Transverse colon (tissue), 4 donors: ENCODE measurements at regions of chr17 and their contacts with region 1.

Region 1: DNA sequence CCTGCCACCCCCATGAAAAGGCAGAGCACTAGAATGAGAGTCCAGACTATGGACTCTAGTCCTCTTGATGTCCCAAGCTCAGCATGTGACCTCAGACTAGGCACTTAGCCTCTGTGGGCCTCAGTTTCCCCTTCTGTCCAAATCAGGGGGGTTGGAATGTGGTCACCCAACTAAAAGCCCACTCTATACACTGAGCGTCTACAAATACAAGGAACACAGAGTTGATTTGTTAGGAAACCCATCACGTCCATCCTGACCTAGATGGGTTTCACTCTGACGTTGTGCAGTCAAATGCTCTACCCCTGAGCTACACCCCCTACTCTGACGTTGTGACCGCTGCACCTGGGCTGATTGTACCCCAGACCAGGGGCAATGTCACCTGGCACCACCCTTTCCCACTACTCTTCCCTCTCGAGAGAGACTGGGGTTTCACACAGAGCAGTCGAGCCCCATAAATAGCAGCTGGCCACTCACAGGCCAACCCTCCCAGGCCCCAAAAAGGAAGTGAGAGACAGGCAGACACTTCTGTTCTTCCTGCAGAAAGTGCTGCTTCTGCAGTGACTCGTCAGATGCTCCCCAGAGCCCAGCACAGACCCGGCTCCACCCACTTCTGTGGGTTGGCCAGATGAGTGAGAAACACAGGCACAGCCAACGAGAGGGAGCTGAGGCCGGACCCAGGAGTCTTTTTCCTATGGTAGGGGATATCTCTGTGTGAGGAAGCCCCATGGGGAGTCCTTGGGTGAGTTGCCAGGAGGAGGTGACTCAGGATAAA is 16.1 kb upstream of the TNFRSF13B start:
- DNase-seq: peak; percentile 85
- H3K4me3 ChIP-seq: no peak overlapping the region
- H3K27ac ChIP-seq: peak overlapping the region; percentile 58 to 83 (median 66)
- H3K4me1 ChIP-seq: peaks cover 3 to 25% (median 12%) of the 10 kb centered on the region in 4 donors
- H3K27me3 ChIP-seq: no peaks in the 10 kb centered on the region
- CTCF ChIP-seq: no peak
- EP300 ChIP-seq: no peak
- POLR2A ChIP-seq: peak; percentile 35

Region 2: DNA sequence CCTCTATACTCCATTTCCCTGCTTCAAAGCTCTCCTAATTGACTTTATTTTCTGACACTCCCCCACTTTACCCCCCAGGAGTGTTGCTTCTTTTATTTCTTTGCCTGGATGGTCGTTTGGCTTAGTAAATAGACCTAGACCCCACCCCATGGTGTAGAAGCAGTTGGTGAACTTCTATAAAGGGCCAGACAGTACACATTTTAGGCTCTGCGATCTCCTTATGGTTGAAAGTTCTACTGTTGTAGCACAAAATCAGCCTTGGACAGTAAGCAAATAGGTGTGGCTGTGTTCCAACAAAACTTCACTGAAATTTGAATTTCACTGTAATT is 450.9 kb before region 1 on chr17:
- in situ Hi-C with region 1: loop called in 2 of 4 experiments (anchors 25 kb)
- intact Hi-C with region 1: no loop called
- DNase-seq: no peak
- H3K4me3 ChIP-seq: peak overlapping the region in 1 of 4 donors; percentile 80
- H3K27ac ChIP-seq: peak overlapping the region; percentile 92 to 98 (median 96)
- H3K4me1 ChIP-seq: peaks cover 0 to 15% (median 3%) of the 10 kb centered on the region in 4 donors
- H3K27me3 ChIP-seq: peaks cover 3% of the 10 kb centered on the region
- CTCF ChIP-seq: no peak
- EP300 ChIP-seq: no peak
- POLR2A ChIP-seq: no peak

Region 3: DNA sequence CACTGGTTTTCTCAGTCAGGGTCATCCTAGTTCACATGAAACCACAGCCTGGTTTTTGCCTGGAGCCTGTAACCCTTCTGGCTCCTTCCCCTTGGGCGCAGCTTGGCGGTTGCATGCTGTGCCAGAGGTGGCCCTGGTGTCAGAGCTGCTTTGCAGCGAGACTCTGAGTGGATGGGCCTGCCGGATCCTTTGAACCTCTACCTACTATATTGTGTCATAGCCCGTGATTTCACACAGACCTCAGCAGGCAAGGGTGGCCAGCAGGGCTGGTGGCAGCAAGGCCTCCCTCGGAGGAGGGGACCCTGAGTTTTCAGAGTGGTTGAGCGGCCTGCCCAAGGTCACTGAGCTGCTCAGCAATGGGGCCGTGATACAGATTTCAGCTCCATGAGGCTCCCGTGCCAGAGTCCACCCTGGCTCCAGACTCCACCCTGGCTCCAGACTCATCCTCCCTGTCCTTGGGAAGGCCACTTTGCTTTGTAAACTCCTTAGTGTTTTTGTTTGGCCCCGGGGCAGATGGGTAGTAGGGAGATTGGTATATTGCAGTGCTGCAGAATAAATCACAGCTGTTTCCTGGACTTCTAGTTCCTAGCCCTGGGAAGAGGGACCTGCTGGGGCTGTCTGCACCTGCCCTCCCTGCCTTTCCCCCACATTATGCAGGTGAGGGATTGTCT is 63.9 kb after region 1 on chr17:
- in situ Hi-C with region 1: loop called in 1 of 4 experiments (anchors 10 kb)
- intact Hi-C with region 1: no loop called
- DNase-seq: peak; percentile 57
- H3K4me3 ChIP-seq: no peak overlapping the region
- H3K27ac ChIP-seq: peak overlapping the region; percentile 77 to 79 (median 78)
- H3K4me1 ChIP-seq: peaks cover 31 to 68% (median 37%) of the 10 kb centered on the region in 4 donors
- H3K27me3 ChIP-seq: no peaks in the 10 kb centered on the region
- CTCF ChIP-seq: no peak
- EP300 ChIP-seq: no peak
- POLR2A ChIP-seq: peak; percentile 11

Region 4: GRCh38 chr17:17088526-17089525 is 100.8 kb after region 1 on chr17:
- in situ Hi-C with region 1: no loop called
- intact Hi-C with region 1: no loop called
- DNase-seq: peak; percentile 4
- H3K4me3 ChIP-seq: no peak overlapping the region
- H3K27ac ChIP-seq: no peak overlapping the region
- H3K4me1 ChIP-seq: peaks cover 0 to 40% (median 16%) of the 10 kb centered on the region in 4 donors
- H3K27me3 ChIP-seq: no peaks in the 10 kb centered on the region
- CTCF ChIP-seq: no peak
- EP300 ChIP-seq: no peak
- POLR2A ChIP-seq: no peak

Region 5: DNA sequence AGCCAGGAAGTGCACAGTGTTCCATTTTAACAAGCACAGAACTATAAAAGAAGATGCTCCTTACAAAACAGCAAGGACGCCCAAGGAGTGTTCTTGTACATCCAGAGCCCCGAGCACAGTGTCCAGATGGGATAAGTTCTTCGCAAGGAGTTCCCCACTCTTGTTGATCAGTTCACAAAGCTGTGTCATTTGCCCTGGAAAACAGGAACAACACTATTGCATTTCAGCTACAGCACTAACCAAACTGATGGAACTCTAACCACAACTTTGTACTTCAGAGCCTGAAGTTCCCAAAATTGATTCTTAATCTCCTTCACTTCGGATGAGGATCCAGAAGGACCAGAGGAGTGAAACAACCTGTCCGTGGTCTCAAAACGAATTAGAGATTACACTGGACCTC is 288.0 kb after region 1 on chr17:
- in situ Hi-C with region 1: no loop called
- intact Hi-C with region 1: no loop called
- DNase-seq: no peak
- H3K4me3 ChIP-seq: no peak overlapping the region
- H3K27ac ChIP-seq: no peak overlapping the region
- H3K4me1 ChIP-seq: peaks cover 10 to 41% (median 12%) of the 10 kb centered on the region in 4 donors
- H3K27me3 ChIP-seq: no peaks in the 10 kb centered on the region
- CTCF ChIP-seq: no peak
- EP300 ChIP-seq: no peak
- POLR2A ChIP-seq: no peak

Region 6: GRCh38 chr17:17303010-17303846 is 315.2 kb after region 1 on chr17 and contains the start of gene NT5M:
- in situ Hi-C with region 1: loop called in 1 of 4 experiments (anchors 25 kb)
- intact Hi-C with region 1: no loop called
- DNase-seq: peak; percentile 80
- H3K4me3 ChIP-seq: peak within 1 kb of the TSS; percentile 40 to 58 (median 50)
- H3K27ac ChIP-seq: peak within 1 kb of the TSS; percentile 75 to 80 (median 80)
- H3K4me1 ChIP-seq: peaks cover 10 to 29% (median 15%) of the 10 kb centered on the region in 4 donors
- H3K27me3 ChIP-seq: no peaks in the 10 kb centered on the region
- CTCF ChIP-seq: no peak
- EP300 ChIP-seq: no peak
- POLR2A ChIP-seq: no peak
- total RNA-seq, gene NT5M: 0.68 to 4.2 (median 1.7) TPM in 3 of 4 donors, not detected in the other